CD8-positive, alpha-beta T cell (primary cell): ENCODE measurements at regions of chr10 and their contacts with region 1.

Region 1: GRCh38 chr10:7275761-7276440 is 134.9 kb downstream of the SFMBT2 start:
- DNase-seq: no peak
- ATAC-seq: no peak
- H3K4me3 ChIP-seq: no peak overlapping the region
- H3K4me3 Mint-ChIP-seq: no peak overlapping the region
- H3K27ac ChIP-seq: no peak overlapping the region
- H3K27ac Mint-ChIP-seq: no peak overlapping the region
- H3K4me1 ChIP-seq: peaks cover 19% of the 10 kb centered on the region
- H3K4me1 Mint-ChIP-seq: peaks cover 60% of the 10 kb centered on the region
- H3K27me3 ChIP-seq: no peaks in the 10 kb centered on the region
- H3K27me3 Mint-ChIP-seq: no peaks in the 10 kb centered on the region
- CTCF ChIP-seq: no peak

Region 2: GRCh38 chr10:7291487-7292270 is 15.8 kb after region 1 on chr10:
- CTCF ChIA-PET with region 1: no interaction called
- POLR2A ChIA-PET with region 1: no interaction called
- intact Hi-C with region 1: loop called in 1 of 2 experiments (anchors 2 kb)
- DNase-seq: no peak
- ATAC-seq: no peak
- H3K4me3 ChIP-seq: no peak overlapping the region
- H3K4me3 Mint-ChIP-seq: no peak overlapping the region
- H3K27ac ChIP-seq: no peak overlapping the region
- H3K27ac Mint-ChIP-seq: peak overlapping the region; percentile 3
- H3K4me1 ChIP-seq: no peaks in the 10 kb centered on the region
- H3K4me1 Mint-ChIP-seq: peaks cover 59% of the 10 kb centered on the region
- H3K27me3 ChIP-seq: no peaks in the 10 kb centered on the region
- H3K27me3 Mint-ChIP-seq: no peaks in the 10 kb centered on the region
- CTCF ChIP-seq: no peak

Region 3: GRCh38 chr10:7318836-7319235 is 42.9 kb after region 1 on chr10:
- CTCF ChIA-PET with region 1: no interaction called
- POLR2A ChIA-PET with region 1: no interaction called
- intact Hi-C with region 1: loop called in 1 of 2 experiments (anchors 5 kb)
- DNase-seq: no peak
- ATAC-seq: no peak
- H3K4me3 ChIP-seq: no peak overlapping the region
- H3K4me3 Mint-ChIP-seq: peak overlapping the region; percentile 50
- H3K27ac ChIP-seq: no peak overlapping the region
- H3K27ac Mint-ChIP-seq: peak overlapping the region; percentile 62
- H3K4me1 ChIP-seq: peaks cover 32% of the 10 kb centered on the region
- H3K4me1 Mint-ChIP-seq: peaks cover 68% of the 10 kb centered on the region
- H3K27me3 ChIP-seq: no peaks in the 10 kb centered on the region
- H3K27me3 Mint-ChIP-seq: no peaks in the 10 kb centered on the region
- CTCF ChIP-seq: no peak